ENCODE measurements at regions of chr10 and their contacts with region 1.

Region 1: GRCh38 chr10:48656241-48656913 is 28.3 kb upstream of the WDFY4 start:
- DNase-seq: peak; percentile 88 to 95
- ATAC-seq: peak; percentile 87 to 95 (median 90)
- H3K4me3 ChIP-seq: peak overlapping the region; percentile 51 to 76 (median 62)
- H3K27ac ChIP-seq: peak overlapping the region in 5 of 10 donors; percentile 26 to 88 (median 71)
- H3K4me1 ChIP-seq: peaks cover 3 to 24% (median 13%) of the 10 kb centered on the region in 9 donors
- H3K27me3 ChIP-seq: peaks cover 0 to 7% (median 0%) of the 10 kb centered on the region in 7 donors
- CTCF ChIP-seq: peak in 8 of 9 donors; percentile 89 to 99 (median 98)

Region 2: GRCh38 chr10:48551861-48552591 is 104.4 kb before region 1 on chr10:
- intact Hi-C with region 1: loop called (anchors 1 to 5 kb)
- DNase-seq: peak; percentile 31 to 43
- ATAC-seq: peak in 7 of 8 donors; percentile 46 to 71 (median 57)
- H3K4me3 ChIP-seq: no peak overlapping the region
- H3K27ac ChIP-seq: no peak overlapping the region
- H3K4me1 ChIP-seq: peaks cover 0 to 29% (median 9%) of the 10 kb centered on the region in 9 donors
- H3K27me3 ChIP-seq: no peaks in the 10 kb centered on the region
- CTCF ChIP-seq: peak; percentile 37 to 81 (median 75)

Region 3: GRCh38 chr10:48614481-48615390 is 41.6 kb before region 1 on chr10:
- intact Hi-C with region 1: loop called in 5 of 10 experiments (anchors 2 to 5 kb)
- DNase-seq: no peak
- ATAC-seq: peak in 1 of 8 donors; percentile 55
- H3K4me3 ChIP-seq: no peak overlapping the region
- H3K27ac ChIP-seq: peak overlapping the region in 1 of 10 donors; percentile 26
- H3K4me1 ChIP-seq: peaks cover 0 to 34% (median 0%) of the 10 kb centered on the region in 9 donors
- H3K27me3 ChIP-seq: no peaks in the 10 kb centered on the region
- CTCF ChIP-seq: peak in 2 of 9 donors; percentile 19 to 35

Region 4: DNA sequence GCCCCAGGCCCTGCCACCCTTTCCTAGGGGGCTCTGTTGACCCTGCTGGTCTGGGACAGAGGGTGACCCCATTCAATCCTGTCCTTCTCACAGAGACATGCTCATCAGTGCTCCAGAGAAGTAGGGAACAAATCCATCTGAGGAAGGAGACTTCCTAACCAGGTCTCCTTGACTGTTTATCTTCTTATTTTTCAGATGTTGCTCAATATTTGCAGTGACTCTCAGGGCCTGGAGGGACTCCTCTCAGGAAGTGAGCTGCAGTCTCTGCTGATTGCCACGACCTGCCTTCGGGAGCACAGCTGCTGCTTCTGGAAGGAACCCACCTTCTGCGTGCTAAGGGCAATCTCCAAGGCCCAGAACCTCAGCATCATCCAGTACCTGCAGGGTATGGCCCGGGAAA is 69.3 kb after region 1 on chr10:
- intact Hi-C with region 1: no loop called
- DNase-seq: no peak
- ATAC-seq: peak in 2 of 8 donors; percentile 29 to 39
- H3K4me3 ChIP-seq: no peak overlapping the region
- H3K27ac ChIP-seq: peak overlapping the region in 1 of 10 donors; percentile 40
- H3K4me1 ChIP-seq: peaks cover 0 to 13% (median 0%) of the 10 kb centered on the region in 9 donors
- H3K27me3 ChIP-seq: no peaks in the 10 kb centered on the region
- CTCF ChIP-seq: no peak

Region 5: GRCh38 chr10:48981310-48981907 is 325.0 kb after region 1 on chr10:
- intact Hi-C with region 1: loop called in 9 of 10 experiments (anchors 2 to 10 kb)
- DNase-seq: peak; percentile 50 to 66
- ATAC-seq: peak; percentile 73 to 93 (median 84)
- H3K4me3 ChIP-seq: no peak overlapping the region
- H3K27ac ChIP-seq: no peak overlapping the region
- H3K4me1 ChIP-seq: peaks cover 0 to 8% (median 3%) of the 10 kb centered on the region in 9 donors
- H3K27me3 ChIP-seq: no peaks in the 10 kb centered on the region
- CTCF ChIP-seq: peak; percentile 78 to 92 (median 87)

Region 6: GRCh38 chr10:49362596-49363260 is 706.4 kb after region 1 on chr10:
- intact Hi-C with region 1: loop called in 1 of 10 experiments (anchors 10 kb)
- DNase-seq: no peak
- ATAC-seq: no peak
- H3K4me3 ChIP-seq: no peak overlapping the region
- H3K27ac ChIP-seq: no peak overlapping the region
- H3K4me1 ChIP-seq: peaks cover 11 to 33% (median 18%) of the 10 kb centered on the region in 9 donors
- H3K27me3 ChIP-seq: peaks cover 0 to 4% (median 0%) of the 10 kb centered on the region in 7 donors
- CTCF ChIP-seq: no peak

Region 7: GRCh38 chr10:49419005-49419404 is 762.6 kb after region 1 on chr10:
- intact Hi-C with region 1: loop called in 1 of 10 experiments (anchors 10 kb)
- DNase-seq: no peak
- ATAC-seq: no peak
- H3K4me3 ChIP-seq: no peak overlapping the region
- H3K27ac ChIP-seq: no peak overlapping the region
- H3K4me1 ChIP-seq: no peaks in the 10 kb centered on the region
- H3K27me3 ChIP-seq: no peaks in the 10 kb centered on the region
- CTCF ChIP-seq: no peak

Region 8: GRCh38 chr10:49518982-49519578 is 862.7 kb after region 1 on chr10:
- intact Hi-C with region 1: loop called in 9 of 10 experiments (anchors 2 to 10 kb)
- DNase-seq: peak in 1 of 2 donors; percentile 19
- ATAC-seq: peak in 7 of 8 donors; percentile 46 to 82 (median 66)
- H3K4me3 ChIP-seq: no peak overlapping the region
- H3K27ac ChIP-seq: no peak overlapping the region
- H3K4me1 ChIP-seq: peaks cover 0 to 30% (median 18%) of the 10 kb centered on the region in 9 donors
- H3K27me3 ChIP-seq: no peaks in the 10 kb centered on the region
- CTCF ChIP-seq: peak; percentile 51 to 75 (median 65)